ENCODE measurements at regions of chr15 and their contacts with region 1.

Region 1: GRCh38 chr15:47196057-47196456 is 521.2 kb upstream of the SEMA6D start:
- DNase-seq: peak; percentile 88
- H3K4me3 ChIP-seq: no peak overlapping the region
- H3K27ac ChIP-seq: no peak overlapping the region
- H3K4me1 ChIP-seq: no peaks in the 10 kb centered on the region
- H3K27me3 ChIP-seq: 0 out of 2 replicates have a peak, but pooled peaks cover 3% of the 10 kb centered on the region

Region 2: DNA sequence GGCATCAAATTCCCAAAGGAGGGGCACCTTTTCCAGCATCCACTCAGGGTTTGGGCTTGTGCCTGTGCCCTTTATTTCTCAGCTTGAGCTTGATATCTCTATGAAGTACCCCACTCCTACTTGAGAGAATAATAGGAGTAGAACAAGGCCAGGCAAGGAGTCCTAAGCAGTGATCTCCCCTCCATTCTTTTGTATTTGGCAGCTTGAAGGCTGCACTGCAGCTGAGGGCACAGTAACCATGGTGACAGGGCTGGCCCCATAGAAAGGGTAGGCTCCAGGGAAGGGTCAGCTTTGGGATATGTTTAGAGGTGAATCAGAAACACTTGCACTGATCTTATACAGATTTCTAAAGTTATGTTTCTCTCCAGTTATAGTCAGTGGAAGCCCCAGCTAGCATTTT is 779.4 kb after region 1 on chr15:
- in situ Hi-C with region 1: loop called (anchors 10 kb)
- DNase-seq: no peak
- H3K4me3 ChIP-seq: no peak overlapping the region
- H3K27ac ChIP-seq: no peak overlapping the region
- H3K4me1 ChIP-seq: no peaks in the 10 kb centered on the region
- H3K27me3 ChIP-seq: 0 out of 2 replicates have a peak, but pooled peaks cover 4% of the 10 kb centered on the region

Region 3: DNA sequence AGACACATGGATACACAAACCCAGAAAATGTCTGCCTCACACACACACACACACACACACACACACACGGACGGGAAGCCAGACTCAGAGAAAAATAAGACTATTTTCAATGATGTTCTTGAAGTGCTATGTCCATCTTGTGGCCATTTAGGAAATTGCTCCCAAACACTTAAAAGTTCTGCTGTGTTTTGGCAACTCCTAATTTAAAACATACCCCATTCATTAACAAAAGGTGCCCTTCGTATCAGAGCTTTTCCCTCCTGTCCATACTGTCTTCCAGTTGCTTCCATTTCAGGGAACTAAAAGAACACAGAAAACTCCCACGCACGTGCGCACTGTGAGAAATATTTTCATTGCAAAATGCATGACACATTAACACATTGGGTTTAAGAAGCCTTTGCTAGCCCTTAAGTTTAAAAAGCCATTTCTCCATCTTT is 1054.6 kb after region 1 on chr15:
- in situ Hi-C with region 1: loop called (anchors 25 kb)
- DNase-seq: peak; percentile 73
- H3K4me3 ChIP-seq: no peak overlapping the region
- H3K27ac ChIP-seq: no peak overlapping the region
- H3K4me1 ChIP-seq: no peaks in the 10 kb centered on the region
- H3K27me3 ChIP-seq: 0 out of 2 replicates have a peak, but pooled peaks cover 3% of the 10 kb centered on the region